GM10248 (cell line): ENCODE measurements at regions of chr10 and their contacts with region 1.

Region 1: DNA sequence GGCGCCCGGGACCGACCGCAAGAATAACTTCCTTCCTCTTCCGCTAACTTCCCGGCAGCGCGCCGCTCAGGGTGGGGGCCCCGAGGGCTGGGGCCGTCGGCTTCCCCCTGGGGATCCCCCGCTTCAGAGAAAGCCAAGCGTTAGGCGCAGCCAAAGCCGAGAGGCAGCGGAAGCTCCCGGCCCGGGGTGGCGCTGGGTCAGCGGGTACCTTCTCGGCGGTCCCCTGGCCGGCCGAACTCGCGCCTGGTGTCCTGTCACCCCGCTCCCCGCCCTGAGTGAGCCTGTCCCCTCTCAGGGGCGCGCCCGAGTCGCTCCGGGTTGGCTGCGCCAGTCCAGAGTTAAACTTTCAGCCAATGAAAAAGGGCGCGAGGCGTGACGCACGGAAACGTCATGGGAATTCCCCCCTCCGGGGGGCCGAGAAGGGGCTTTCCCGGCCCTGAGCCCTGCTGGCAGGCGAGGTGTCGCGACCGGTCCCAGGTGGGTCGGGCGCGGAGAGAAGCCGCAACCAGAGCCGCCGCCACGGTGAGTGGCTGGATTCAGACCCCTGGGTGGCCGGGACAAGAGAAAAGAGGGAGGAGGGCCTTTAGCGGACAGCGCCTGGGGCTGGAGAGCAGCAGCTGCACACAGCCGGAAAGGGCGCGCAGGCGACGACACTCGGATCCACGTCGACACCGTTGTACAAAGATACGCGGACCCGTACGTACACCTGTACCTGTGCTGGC is 1.3 kb upstream of the NFKB2 start:
- DNase-seq: peak; percentile 98
- CTCF ChIP-seq: no peak

Region 2: DNA sequence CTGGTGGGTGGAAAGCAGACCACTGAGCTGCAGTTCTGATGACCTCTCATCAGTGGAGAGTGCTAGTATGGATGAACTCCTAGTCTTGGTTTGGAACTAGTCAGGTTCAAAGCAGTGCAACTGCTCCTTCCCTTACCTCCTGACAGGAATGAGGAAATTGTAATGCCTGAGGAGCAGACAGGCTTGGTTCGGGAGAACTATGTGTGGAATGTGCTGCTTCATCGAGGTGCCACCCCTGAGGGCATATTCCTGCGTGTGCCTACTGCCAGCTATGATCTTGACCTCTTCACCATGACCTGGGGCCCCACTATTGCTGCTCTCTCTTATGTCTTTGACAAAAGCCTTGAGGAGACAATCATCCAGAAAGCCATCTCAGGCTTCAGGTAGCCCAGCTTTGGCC is 26.2 kb before region 1 on chr10:
- CTCF ChIA-PET with region 1: interaction called, 10 read pairs
- POLR2A ChIA-PET with region 1: no interaction called
- DNase-seq: no peak
- CTCF ChIP-seq: no peak

Region 3: DNA sequence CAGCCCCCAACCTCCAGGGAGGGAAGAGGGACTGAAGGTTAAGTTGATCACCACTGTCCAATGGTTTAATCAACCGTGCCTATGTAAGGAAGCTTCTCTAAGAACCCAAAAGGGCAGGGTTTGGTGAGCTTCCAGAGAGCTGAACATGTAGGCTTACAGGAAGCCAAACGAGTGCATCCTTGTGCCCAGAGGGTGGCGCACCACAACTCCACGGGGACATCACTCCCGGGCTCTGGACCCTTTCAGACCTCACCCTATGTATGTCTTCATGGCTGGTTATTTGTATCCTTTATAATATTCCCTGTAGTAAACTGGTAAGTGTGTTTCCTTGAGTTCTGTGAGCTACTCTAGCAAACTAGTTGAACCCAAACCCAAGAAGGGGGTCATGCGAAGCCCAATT is 10.2 kb before region 1 on chr10:
- CTCF ChIA-PET with region 1: interaction called, 52 read pairs
- POLR2A ChIA-PET with region 1: interaction called, 4 read pairs
- DNase-seq: no peak
- CTCF ChIP-seq: no peak

Region 4: DNA sequence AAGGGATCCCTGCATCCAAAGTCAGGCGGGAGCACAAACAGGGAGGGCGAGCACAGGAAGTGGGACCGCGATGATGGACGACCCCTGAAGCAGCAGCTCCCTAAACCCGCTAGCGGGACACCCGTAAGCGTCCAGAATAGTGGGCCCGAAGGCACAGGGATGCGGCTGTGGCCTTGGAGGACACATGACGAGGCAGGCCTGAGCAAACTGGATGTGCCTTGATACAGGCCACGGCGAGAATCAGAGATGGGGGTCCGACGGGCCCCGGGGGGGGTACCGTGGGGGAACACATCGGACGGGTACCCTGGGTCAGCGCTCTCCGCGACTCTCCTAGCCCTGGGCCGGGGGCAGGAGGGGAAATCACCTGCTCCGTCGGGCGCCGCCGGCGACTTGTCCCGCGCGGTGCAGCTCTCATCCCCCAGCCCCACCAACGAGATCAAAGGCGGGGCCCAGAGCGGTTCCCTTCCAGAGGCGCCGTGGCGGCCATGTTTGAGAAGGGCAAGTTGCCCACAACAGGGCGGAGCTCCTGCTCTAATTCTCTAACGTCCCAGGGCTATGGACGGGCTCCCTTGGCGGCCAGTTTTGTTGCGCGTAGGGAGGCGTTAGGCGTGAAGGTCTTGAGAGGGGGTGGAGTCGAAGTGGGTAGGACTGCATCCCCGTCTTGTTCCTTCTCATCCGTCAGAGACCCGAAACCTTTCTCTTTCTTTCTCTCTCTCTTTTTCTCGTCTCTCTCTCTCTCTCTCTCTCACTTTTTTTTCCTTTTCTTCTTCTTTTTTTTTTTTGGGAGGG is 38.1 kb after region 1 on chr10 and contains the start of gene CUEDC2:
- CTCF ChIA-PET with region 1: interaction called, 140 read pairs
- POLR2A ChIA-PET with region 1: interaction called, 3 read pairs
- DNase-seq: peak; percentile 94
- CTCF ChIP-seq: no peak

Region 5: GRCh38 chr10:102468683-102469082 is 74.4 kb after region 1 on chr10:
- CTCF ChIA-PET with region 1: no interaction called
- POLR2A ChIA-PET with region 1: no interaction called
- DNase-seq: no peak
- CTCF ChIP-seq: no peak

Region 6: GRCh38 chr10:102583435-102584417 is 189.5 kb after region 1 on chr10:
- CTCF ChIA-PET with region 1: interaction called, 12 read pairs
- POLR2A ChIA-PET with region 1: no interaction called
- DNase-seq: peak; percentile 89
- CTCF ChIP-seq: peak; percentile 85